OCI-LY7 (cell line): ENCODE measurements at regions of chr21 and their contacts with region 1.

Region 1: GRCh38 chr21:35051287-35051818 is 2.3 kb upstream of the RUNX1 start:
- DNase-seq: peak; percentile 92
- H3K4me3 ChIP-seq: peak overlapping the region; percentile 73
- H3K27ac ChIP-seq: peak overlapping the region; percentile 87
- H3K4me1 ChIP-seq: peaks cover 33% of the 10 kb centered on the region
- CTCF ChIP-seq: peak; percentile 87

Region 2: GRCh38 chr21:34745557-34746255 is 305.6 kb before region 1 on chr21:
- CTCF ChIA-PET with region 1: no interaction called
- POLR2A ChIA-PET with region 1: no interaction called
- intact Hi-C with region 1: loop called (anchors 5 kb)
- DNase-seq: peak; percentile 69
- H3K4me3 ChIP-seq: peak overlapping the region; percentile 12
- H3K27ac ChIP-seq: no peak overlapping the region
- H3K4me1 ChIP-seq: no peaks in the 10 kb centered on the region
- CTCF ChIP-seq: peak; percentile 93

Region 3: GRCh38 chr21:34865928-34866284 is 185.4 kb before region 1 on chr21:
- CTCF ChIA-PET with region 1: no interaction called
- POLR2A ChIA-PET with region 1: no interaction called
- intact Hi-C with region 1: no loop called
- DNase-seq: peak; percentile 73
- H3K4me3 ChIP-seq: peak overlapping the region; percentile 1
- H3K27ac ChIP-seq: peak overlapping the region; percentile 2
- H3K4me1 ChIP-seq: peaks cover 26% of the 10 kb centered on the region
- CTCF ChIP-seq: no peak

Region 4: GRCh38 chr21:34974162-34974981 is 77.0 kb before region 1 on chr21:
- CTCF ChIA-PET with region 1: no interaction called
- POLR2A ChIA-PET with region 1: no interaction called
- intact Hi-C with region 1: loop called (anchors 1 kb)
- DNase-seq: peak; percentile 73
- H3K4me3 ChIP-seq: peak overlapping the region; percentile 15
- H3K27ac ChIP-seq: no peak overlapping the region
- H3K4me1 ChIP-seq: peaks cover 25% of the 10 kb centered on the region
- CTCF ChIP-seq: no peak

Region 5: GRCh38 chr21:35011681-35012080 is 39.7 kb before region 1 on chr21:
- CTCF ChIA-PET with region 1: no interaction called
- POLR2A ChIA-PET with region 1: no interaction called
- intact Hi-C with region 1: no loop called
- DNase-seq: no peak
- H3K4me3 ChIP-seq: no peak overlapping the region
- H3K27ac ChIP-seq: no peak overlapping the region
- H3K4me1 ChIP-seq: no peaks in the 10 kb centered on the region
- CTCF ChIP-seq: no peak

Region 6: DNA sequence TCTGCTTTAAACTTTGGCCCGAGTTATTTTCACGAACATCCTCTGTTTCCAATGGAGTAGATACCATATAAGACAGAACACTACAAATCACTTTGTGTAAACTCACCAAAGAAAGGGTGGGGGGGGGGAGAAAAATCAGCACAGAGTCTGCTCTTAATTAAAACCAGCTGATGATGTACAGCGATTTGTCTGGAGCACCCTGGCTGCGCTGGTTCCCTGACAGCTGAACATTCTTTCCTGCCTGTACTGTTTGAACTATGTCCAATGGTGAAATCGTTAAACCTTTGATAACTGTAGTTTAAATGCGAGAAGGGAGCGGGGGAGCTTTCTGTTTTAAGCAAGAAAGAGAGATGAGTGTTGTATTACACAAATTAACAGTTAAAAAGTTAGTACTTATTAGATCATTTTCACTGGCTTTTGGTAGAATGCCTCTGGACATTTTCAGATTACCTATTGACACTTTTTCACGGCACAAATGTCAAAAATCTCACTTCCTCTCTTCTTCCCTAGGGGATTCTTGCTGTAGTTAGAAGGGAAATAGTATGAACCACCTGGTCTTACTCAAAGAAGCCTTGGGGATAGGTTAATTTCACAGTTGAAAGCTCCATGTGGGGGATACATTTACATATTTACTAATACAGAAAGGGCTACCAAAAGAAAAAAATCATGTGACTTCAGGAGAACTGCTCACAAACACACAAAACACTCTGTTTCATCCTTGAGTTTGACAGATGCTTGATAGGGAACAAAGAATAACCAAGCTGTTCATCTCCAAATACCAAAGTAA is 137.9 kb after region 1 on chr21:
- CTCF ChIA-PET with region 1: no interaction called
- POLR2A ChIA-PET with region 1: no interaction called
- intact Hi-C with region 1: loop called (anchors 5 kb)
- DNase-seq: peak; percentile 91
- H3K4me3 ChIP-seq: peak overlapping the region; percentile 59
- H3K27ac ChIP-seq: peak overlapping the region; percentile 71
- H3K4me1 ChIP-seq: peaks cover 35% of the 10 kb centered on the region
- CTCF ChIP-seq: no peak

Region 7: DNA sequence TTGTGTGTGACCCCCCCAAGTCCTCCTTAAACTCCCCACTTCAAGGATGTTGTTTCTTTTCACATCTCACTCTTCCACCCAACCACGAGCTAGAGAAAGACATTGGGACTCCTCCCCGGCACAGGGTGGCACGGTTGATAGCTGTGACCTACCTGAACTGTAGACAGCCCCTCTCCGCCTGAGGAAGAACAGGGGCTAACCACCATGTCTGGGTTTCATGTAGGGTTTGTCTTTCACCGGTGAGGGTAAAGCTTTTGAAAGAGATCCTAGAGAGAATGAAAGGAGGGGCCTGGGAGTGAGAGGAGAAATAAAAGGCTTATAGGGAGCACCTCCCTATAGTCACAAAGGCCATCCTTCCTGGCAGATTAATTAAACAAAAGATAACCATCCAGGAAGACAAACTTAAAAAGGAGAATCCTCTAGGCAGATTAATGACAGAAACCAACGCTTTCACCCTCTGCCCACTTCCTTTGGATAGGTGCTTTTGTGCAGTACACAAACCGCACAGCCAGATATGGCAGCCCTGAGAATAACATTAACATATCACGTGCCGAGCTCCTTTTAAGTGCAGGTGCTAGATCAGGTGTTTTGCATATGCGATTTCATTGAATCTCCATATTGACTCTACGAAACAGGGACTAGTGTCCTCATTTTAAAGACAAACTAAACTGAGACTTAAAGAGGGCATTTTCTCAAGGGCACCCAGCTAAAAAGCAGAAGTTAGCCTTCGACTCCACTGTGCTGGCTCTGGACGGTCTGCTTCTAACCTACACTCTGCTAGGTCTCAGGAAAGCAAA is 175.8 kb after region 1 on chr21:
- CTCF ChIA-PET with region 1: no interaction called
- POLR2A ChIA-PET with region 1: interaction called, 10 read pairs
- intact Hi-C with region 1: loop called (anchors 1 kb)
- DNase-seq: peak; percentile 98
- H3K4me3 ChIP-seq: peak overlapping the region; percentile 59
- H3K27ac ChIP-seq: peak overlapping the region; percentile 98
- H3K4me1 ChIP-seq: peaks cover 86% of the 10 kb centered on the region
- CTCF ChIP-seq: no peak

Region 8: GRCh38 chr21:35932232-35932911 is 881.0 kb after region 1 on chr21:
- CTCF ChIA-PET with region 1: no interaction called
- POLR2A ChIA-PET with region 1: no interaction called
- intact Hi-C with region 1: loop called (anchors 10 kb)
- DNase-seq: peak; percentile 91
- H3K4me3 ChIP-seq: peak overlapping the region; percentile 21
- H3K27ac ChIP-seq: peak overlapping the region; percentile 66
- H3K4me1 ChIP-seq: peaks cover 22% of the 10 kb centered on the region
- CTCF ChIP-seq: no peak